HepG2 (cell line): ENCODE measurements at regions of chr22 and their contacts with region 1.

Region 1: DNA sequence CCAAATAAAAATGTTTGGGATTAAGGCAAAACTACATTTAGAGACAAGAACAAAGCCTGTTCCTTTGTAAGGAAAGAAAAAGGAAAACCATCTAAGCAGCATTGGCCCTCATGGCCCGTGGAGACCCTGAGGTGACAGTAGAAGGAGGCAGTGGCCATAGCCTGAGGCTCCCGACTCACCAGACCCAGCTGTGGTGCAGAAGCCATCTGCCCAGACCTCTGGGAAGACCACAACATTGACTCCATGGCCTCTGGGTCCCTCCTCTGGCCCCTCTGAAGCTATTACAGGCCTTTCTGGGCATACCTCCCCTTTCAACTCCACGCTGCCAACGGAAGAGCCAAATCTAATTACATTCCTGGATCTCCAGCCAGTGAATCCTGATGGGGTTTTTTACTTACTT is 6.4 kb downstream of the PRAME start:
- DNase-seq: peak; percentile 44
- ATAC-seq: peak; percentile 89
- H3K4me3 ChIP-seq: no peak overlapping the region
- H3K27ac ChIP-seq: no peak overlapping the region
- H3K4me1 ChIP-seq: no peaks in the 10 kb centered on the region
- H3K27me3 ChIP-seq: peaks cover 1 to 10% of the 10 kb centered on the region in 2 experiments; a peak in 2 of 5 replicates
- CTCF ChIP-seq: peak; percentile 77
- EP300 ChIP-seq: no peak
- POLR2A ChIP-seq: no peak
- RAD21 ChIP-seq: peak; percentile 62

Region 2: DNA sequence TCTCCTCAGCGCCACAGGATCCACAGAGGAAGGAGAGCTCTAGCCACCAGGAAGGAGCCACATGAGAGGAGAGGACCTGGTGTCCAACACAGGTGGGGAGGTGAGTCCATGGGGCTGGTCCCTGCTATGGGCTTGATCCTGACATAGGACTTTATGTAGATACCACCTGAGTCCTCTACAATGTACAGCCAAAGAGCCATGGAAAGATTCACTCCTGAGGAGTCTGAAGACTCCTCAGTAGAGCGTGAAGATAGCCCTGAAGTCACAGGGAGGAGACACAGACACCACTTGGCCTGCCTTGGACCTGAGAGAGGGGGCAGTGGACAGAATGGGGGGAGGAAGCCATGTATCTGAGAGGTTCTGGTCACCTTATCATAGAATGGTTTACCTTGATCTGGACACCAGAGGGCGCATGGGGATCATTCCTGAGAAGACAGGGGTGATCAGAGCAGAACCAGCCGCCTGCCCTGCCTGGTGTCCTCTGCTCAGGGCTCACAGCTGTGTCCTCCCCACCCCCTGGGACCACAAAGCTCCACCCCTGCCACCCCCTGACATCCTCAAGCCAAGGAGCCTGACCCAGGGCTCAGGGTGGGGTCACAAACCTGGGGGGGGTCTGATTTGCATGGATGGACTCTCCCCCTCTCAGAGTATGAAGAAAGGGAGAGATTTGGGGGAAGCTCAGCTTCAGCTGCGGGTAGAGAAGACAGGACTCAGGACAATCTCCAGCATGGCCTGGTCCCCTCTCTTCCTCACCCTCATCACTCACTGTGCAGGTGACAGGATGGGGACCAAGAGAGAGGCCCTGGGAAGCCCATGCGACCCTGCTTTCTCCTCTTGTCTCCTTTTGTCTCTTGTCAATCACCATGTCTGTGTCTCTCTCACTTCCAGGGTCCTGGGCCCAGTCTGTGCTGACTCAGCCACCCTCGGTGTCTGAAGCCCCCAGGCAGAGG is 121.1 kb before region 1 on chr22:
- CTCF ChIA-PET with region 1: no interaction called
- POLR2A ChIA-PET with region 1: no interaction called
- in situ Hi-C with region 1: no loop called
- intact Hi-C with region 1: loop called (anchors 1 kb)
- DNase-seq: peak; percentile 49
- ATAC-seq: peak; percentile 91
- H3K4me3 ChIP-seq: no peak overlapping the region
- H3K27ac ChIP-seq: no peak overlapping the region
- H3K4me1 ChIP-seq: peaks cover 32% of the 10 kb centered on the region
- H3K27me3 ChIP-seq: 0 out of 5 replicates have a peak, but pooled peaks cover 0 to 2% of the 10 kb centered on the region in 2 experiments
- CTCF ChIP-seq: peak; percentile 85
- EP300 ChIP-seq: no peak
- POLR2A ChIP-seq: no peak
- RAD21 ChIP-seq: no peak

Region 3: DNA sequence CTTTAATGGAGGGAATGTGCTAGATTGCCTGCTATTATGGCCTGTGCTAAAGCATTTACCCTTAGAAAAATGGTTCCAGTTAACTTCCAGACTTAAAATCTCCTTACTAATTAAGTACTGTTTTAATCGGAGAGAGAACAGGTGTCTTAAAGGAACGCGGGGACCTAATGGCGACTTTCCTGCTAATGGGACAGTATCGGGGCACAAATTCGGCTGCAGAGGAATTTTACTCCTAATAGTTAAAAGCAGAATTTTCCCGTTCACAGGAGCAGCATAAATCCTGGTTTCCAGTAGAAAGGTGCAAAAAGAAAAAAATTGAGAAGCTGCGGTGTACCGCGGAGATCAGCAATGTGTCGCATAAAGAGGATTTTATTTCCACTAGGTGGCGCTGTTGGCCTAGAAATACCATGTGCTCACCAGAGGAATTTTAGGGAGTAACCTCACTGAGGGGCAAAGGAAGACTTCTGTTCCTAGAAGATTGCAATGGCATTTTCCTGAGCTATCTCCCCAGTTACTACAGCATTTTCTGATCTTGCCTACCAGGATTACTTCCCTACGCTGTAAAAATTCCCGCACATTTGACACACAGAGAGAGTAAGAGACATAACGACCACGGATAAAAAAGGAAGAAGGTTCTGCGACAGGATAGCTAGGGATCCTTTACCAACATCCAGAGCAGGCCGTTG is 88.6 kb before region 1 on chr22:
- CTCF ChIA-PET with region 1: interaction called, 14 read pairs
- POLR2A ChIA-PET with region 1: no interaction called
- in situ Hi-C with region 1: loop called (anchors 5 kb)
- intact Hi-C with region 1: loop called (anchors 1 kb)
- DNase-seq: peak; percentile 62
- ATAC-seq: peak; percentile 78
- H3K4me3 ChIP-seq: no peak overlapping the region
- H3K27ac ChIP-seq: no peak overlapping the region
- H3K4me1 ChIP-seq: no peaks in the 10 kb centered on the region
- H3K27me3 ChIP-seq: peaks cover 0 to 6% of the 10 kb centered on the region in 2 experiments; a peak in 1 of 5 replicates
- CTCF ChIP-seq: peak; percentile 84
- EP300 ChIP-seq: no peak
- POLR2A ChIP-seq: no peak
- RAD21 ChIP-seq: peak; percentile 73; the same call in 1 of the 2 replicates